Astrocyte of the cerebellum (primary cell): ENCODE measurements at regions of chr10 and their contacts with region 1.

Region 1: GRCh38 chr10:92181575-92181974 is 109.3 kb downstream of the CPEB3 start:
- DNase-seq: no peak
- H3K4me3 ChIP-seq: no peak overlapping the region
- CTCF ChIP-seq: peak; percentile 26

Region 2: GRCh38 chr10:92110039-92110794 is 71.4 kb before region 1 on chr10:
- in situ Hi-C with region 1: loop called (anchors 5 kb)
- DNase-seq: no peak
- H3K4me3 ChIP-seq: no peak overlapping the region
- CTCF ChIP-seq: no peak

Region 3: DNA sequence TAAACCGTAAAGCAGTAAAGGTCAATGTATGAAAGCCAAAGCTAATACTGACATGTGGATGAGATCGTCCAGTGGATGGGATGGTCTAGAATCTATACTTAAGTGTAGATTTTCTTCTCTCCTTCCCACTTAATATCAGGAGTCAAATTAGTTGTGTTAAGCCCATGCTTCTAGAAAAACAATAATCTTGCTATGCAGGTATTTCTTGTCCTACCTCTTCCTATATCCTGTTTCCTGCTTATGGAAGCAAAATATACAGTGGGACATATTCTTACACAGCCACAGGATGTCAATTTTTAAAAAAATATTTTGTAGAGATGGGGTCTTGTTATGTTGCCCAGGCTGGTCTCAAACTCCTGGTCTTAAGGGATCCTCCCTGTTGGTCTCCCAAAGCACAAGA is 81.8 kb after region 1 on chr10:
- in situ Hi-C with region 1: loop called (anchors 10 kb)
- DNase-seq: no peak
- H3K4me3 ChIP-seq: no peak overlapping the region
- CTCF ChIP-seq: no peak

Region 4: GRCh38 chr10:92440578-92440977 is 259.0 kb after region 1 on chr10:
- in situ Hi-C with region 1: loop called (anchors 10 kb)
- DNase-seq: no peak
- H3K4me3 ChIP-seq: no peak overlapping the region
- CTCF ChIP-seq: no peak